Calu3 (cell line): ENCODE measurements at regions of chr4 and their contacts with region 1.

Region 1: DNA sequence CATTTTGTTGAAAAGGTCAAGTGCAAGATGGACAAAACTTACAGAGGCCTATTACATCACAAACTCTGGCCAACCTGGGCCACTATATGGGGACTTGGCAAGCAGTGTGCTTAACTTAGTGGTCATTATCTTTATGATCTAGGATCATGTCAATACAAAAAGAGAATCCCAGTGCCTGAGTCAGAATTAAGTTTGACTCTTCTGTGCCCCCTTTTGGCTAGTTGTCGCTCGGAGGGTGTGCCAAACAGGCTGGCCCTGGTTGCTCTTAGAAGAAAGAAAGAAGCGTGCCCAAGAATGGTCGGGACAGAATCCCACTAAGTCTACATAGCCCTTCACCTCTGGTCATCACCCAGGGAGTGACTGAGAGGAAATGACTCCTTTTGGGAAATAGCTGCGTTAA is 100.1 kb downstream of the EIF4E start:
- DNase-seq: peak; percentile 12
- H3K4me3 Mint-ChIP-seq: no peak overlapping the region
- H3K27ac Mint-ChIP-seq: no peak overlapping the region
- H3K4me1 Mint-ChIP-seq: no peaks in the 10 kb centered on the region
- H3K27me3 Mint-ChIP-seq: no peaks in the 10 kb centered on the region
- CTCF ChIP-seq: no peak

Region 2: DNA sequence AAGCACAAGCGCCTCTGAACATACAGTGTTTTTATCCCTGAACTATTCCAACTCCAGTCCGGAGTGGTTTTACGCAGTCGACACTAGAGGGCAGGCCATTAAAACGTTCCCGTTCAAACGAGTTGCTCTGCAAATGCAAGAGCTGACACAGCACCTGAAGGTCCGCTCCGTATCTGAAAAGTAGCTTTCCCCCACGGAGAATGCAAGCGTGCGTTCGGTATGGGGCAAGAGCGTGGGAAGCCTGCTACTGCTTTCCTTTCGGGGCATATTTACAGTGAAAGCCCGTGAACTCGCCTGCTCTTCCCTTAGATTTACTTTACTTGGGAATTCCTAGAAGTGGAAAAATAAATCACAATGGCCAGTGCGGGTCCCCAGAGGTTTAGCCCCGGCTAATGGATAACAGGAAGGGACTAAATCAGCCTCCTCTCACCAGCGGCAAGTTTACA is 361.2 kb before region 1 on chr4:
- CTCF ChIA-PET with region 1: no interaction called
- intact Hi-C with region 1: loop called (anchors 10 kb)
- DNase-seq: peak; percentile 66
- H3K4me3 Mint-ChIP-seq: peak overlapping the region; percentile 67
- H3K27ac Mint-ChIP-seq: no peak overlapping the region
- H3K4me1 Mint-ChIP-seq: no peaks in the 10 kb centered on the region
- H3K27me3 Mint-ChIP-seq: no peaks in the 10 kb centered on the region
- CTCF ChIP-seq: peak; percentile 59

Region 3: GRCh38 chr4:98728433-98728832 is 100.4 kb before region 1 on chr4:
- CTCF ChIA-PET with region 1: no interaction called
- intact Hi-C with region 1: no loop called
- DNase-seq: no peak
- H3K4me3 Mint-ChIP-seq: no peak overlapping the region
- H3K27ac Mint-ChIP-seq: no peak overlapping the region
- H3K4me1 Mint-ChIP-seq: peaks cover 7% of the 10 kb centered on the region
- H3K27me3 Mint-ChIP-seq: no peaks in the 10 kb centered on the region
- CTCF ChIP-seq: no peak